ENCODE measurements at regions of chr9 and their contacts with region 1.

Region 1: GRCh38 chr9:129028192-129028957 is at the start of gene SH3GLB2:
- DNase-seq: peak; percentile 96
- H3K4me3 Mint-ChIP-seq: peak within 1 kb of the TSS; percentile 85
- H3K27ac Mint-ChIP-seq: peak within 1 kb of the TSS; percentile 77
- H3K4me1 Mint-ChIP-seq: peaks cover 17% of the 10 kb centered on the region
- H3K27me3 Mint-ChIP-seq: no peaks in the 10 kb centered on the region
- total RNA-seq, gene SH3GLB2: 69.6 and 73.9 TPM in 2 replicates

Region 2: DNA sequence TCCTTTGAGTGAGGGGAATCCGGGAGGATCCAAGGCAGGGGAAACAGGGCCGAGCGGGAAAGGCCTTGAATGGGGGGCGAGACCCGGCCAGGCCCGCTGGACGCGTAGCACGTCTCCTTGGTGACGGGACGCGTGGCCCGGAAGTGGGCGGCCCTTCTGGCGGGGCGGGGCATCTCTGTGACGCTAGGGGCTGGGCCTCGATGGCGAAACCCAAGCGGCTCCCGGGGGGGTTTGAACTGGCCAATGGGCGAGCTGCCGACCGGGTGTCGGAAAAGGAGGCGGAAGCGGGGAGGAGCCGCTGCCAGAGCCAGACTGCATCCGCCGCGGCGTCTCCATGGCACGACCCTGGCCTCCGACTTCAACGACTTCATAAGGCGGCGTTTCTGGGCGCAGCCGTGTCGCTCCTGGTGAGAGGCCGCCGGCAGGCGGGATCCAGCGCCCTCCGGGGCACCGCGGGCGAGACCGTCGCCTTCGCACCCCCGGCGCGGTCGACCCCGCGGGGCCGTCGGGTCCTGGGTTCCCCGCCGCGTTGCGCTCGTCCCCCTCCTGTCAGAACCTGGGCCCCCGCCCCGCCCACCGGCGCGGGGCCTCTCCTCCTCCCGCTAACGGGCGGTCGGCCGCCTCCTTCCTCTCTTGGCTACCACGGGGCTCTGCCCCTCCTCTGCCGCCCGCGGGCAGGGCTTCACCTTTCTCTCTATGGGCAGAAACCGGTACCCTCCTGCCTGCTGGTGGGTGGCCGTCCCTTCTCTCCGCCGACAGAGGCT is 572.3 kb before region 1 on chr9 and contains the start of gene ODF2:
- intact Hi-C with region 1: loop called (anchors 5 kb)
- DNase-seq: peak; percentile 100
- H3K4me3 Mint-ChIP-seq: peak within 1 kb of the TSS; percentile 91
- H3K27ac Mint-ChIP-seq: peak within 1 kb of the TSS; percentile 94
- H3K4me1 Mint-ChIP-seq: peaks cover 20% of the 10 kb centered on the region
- H3K27me3 Mint-ChIP-seq: no peaks in the 10 kb centered on the region
- total RNA-seq, gene ODF2: 60.8 and 64.8 TPM in 2 replicates

Region 3: DNA sequence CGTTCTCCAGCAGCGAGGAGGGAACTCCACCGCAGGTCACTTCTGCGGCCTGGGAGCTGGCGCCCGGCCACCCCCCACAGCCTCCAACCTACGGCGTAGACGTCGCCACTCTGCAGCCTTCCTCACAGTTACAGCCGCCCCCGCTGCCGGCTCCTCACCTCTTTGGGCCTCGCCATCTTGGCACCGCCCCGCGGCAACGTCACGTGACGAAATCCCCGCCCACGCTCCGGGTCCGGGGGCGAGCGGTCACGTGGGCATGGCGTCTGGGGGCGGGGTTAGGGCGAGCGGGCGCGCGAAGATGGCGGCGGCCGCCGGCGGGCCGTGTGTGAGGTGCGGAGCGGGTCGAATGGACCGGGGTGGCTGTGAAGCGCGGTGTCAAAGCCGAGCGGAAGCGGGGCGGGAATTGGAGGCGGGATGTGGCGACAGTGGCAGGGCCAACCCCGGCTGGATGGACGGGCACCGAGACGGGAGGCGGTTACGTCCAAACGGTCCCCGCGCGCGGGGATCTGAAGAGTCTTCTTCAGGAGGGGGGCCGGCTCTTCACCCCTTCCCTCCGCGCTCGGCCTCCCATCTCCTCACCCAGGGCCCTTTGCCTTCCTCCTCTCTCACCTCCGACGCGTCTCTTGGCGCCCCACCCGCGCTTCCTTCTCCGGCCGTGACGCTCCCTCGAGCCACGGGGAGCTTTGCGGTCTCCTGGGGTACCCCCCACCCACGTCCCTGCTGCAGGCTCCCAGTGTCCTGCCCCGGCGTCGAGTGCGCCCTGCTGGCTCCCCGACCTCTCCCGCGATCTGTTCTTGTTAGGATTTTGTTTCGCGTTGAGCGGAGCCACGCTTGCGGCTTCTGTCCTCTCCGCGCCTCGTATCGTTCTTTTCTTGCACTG is 80.7 kb before region 1 on chr9 and contains the starts of genes DOLK and NUP188:
- intact Hi-C with region 1: loop called (anchors 1 kb)
- DNase-seq: peak; percentile 100
- H3K4me3 Mint-ChIP-seq: peak within 1 kb of the TSS; percentile 92
- H3K27ac Mint-ChIP-seq: peak within 1 kb of the TSS; percentile 99
- H3K4me1 Mint-ChIP-seq: peaks cover 33% of the 10 kb centered on the region
- H3K27me3 Mint-ChIP-seq: no peaks in the 10 kb centered on the region
- total RNA-seq, gene DOLK: 15.2 and 15.9 TPM in 2 replicates
- total RNA-seq, gene NUP188: 162 and 176 TPM in 2 replicates

Region 4: GRCh38 chr9:129042016-129042415 is 13.6 kb after region 1 on chr9:
- intact Hi-C with region 1: no loop called
- DNase-seq: no peak
- H3K4me3 Mint-ChIP-seq: no peak overlapping the region
- H3K27ac Mint-ChIP-seq: no peak overlapping the region
- H3K4me1 Mint-ChIP-seq: peaks cover 15% of the 10 kb centered on the region
- H3K27me3 Mint-ChIP-seq: no peaks in the 10 kb centered on the region

Region 5: GRCh38 chr9:129080602-129081387 is 52.4 kb after region 1 on chr9 and contains the start of gene DOLPP1:
- intact Hi-C with region 1: loop called (anchors 2 kb)
- DNase-seq: peak; percentile 100
- H3K4me3 Mint-ChIP-seq: peak within 1 kb of the TSS; percentile 95
- H3K27ac Mint-ChIP-seq: peak within 1 kb of the TSS; percentile 84
- H3K4me1 Mint-ChIP-seq: peaks cover 19% of the 10 kb centered on the region
- H3K27me3 Mint-ChIP-seq: no peaks in the 10 kb centered on the region
- total RNA-seq, gene DOLPP1: 24.7 and 24.8 TPM in 2 replicates

Region 6: GRCh38 chr9:129110740-129111527 is 82.6 kb after region 1 on chr9 and contains the starts of genes CRAT and PTPA:
- intact Hi-C with region 1: loop called (anchors 2 kb)
- DNase-seq: peak; percentile 98
- H3K4me3 Mint-ChIP-seq: peak within 1 kb of the TSS; percentile 96
- H3K27ac Mint-ChIP-seq: peak within 1 kb of the TSS; percentile 96
- H3K4me1 Mint-ChIP-seq: peaks cover 29% of the 10 kb centered on the region
- H3K27me3 Mint-ChIP-seq: no peaks in the 10 kb centered on the region
- total RNA-seq, gene CRAT: 8.6 and 11.4 TPM in 2 replicates
- total RNA-seq, gene PTPA: 104 and 107 TPM in 2 replicates